Activated naive CD4-positive, alpha-beta T cell treated with anti-CD3 and anti-CD28 coated beads for 36 hours (primary cell): ENCODE measurements at regions of chr17 and their contacts with region 1.

Region 1: DNA sequence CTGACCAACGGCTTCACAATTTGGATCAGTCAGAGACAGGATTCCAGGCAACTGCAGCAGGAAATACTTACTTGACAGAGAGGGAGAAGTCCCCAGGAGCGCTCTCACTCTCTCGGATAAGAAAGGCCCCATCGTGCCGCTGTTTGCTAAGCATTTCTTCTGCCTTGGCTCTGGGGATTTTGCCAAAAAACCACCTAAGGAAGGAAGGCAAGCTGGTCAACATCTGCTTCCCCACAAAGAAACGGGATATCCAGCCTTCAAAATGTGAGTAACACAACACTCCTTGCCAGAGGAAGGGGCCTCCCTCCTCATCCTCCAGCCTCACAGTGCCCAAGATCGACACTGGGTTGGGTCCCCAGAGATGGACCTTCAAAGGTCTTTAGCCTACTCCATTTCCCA is 36.6 kb upstream of the SLC25A19 start:
- DNase-seq: no peak
- H3K4me3 Mint-ChIP-seq: no peak overlapping the region
- H3K27ac Mint-ChIP-seq: peak overlapping the region; percentile 74
- H3K4me1 Mint-ChIP-seq: peaks cover 31% of the 10 kb centered on the region
- H3K27me3 Mint-ChIP-seq: no peaks in the 10 kb centered on the region

Region 2: GRCh38 chr17:75338335-75338734 is 12.5 kb after region 1 on chr17:
- CTCF ChIA-PET with region 1: interaction called, 15 read pairs
- intact Hi-C with region 1: loop called (anchors 2 kb)
- DNase-seq: no peak
- H3K4me3 Mint-ChIP-seq: peak overlapping the region; percentile 56
- H3K27ac Mint-ChIP-seq: peak overlapping the region; percentile 90
- H3K4me1 Mint-ChIP-seq: peaks cover 78% of the 10 kb centered on the region
- H3K27me3 Mint-ChIP-seq: no peaks in the 10 kb centered on the region

Region 3: DNA sequence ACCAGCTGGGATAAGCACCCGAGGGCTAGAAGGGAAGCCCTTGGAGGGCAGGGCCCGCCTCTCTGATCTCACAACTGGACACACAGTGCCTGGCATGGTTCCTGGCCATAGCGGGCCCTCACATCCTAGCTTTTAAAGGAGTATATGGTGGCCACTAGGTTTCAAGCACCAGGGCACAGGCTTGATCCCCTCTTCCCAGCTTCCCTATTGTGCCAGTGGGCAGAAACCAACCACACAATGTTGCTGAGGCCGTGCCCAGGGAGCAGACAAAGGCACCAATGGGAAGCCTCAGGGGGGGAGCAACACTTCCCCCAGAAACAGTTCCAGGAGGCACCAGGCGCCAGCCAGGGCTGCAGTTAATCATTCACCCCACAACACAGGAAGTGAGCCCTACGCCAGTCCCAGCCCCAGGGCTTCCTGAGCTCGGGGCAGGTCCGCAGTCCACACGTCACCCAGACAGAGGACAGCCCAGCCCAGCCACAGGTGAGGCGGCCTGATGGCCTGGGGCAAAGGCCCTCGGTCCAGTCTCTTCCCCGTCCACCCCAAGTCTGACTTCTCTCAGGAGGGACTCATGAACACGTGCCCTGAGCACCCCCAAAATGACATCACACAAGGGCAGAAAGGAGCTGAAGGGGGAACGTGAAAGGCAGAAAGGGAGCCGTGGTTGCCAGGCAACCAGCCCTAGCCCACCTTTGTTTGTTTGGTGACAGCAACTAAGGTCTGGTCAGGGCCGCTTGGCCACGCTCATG is 320.2 kb after region 1 on chr17:
- CTCF ChIA-PET with region 1: no interaction called
- intact Hi-C with region 1: no loop called
- DNase-seq: no peak
- H3K4me3 Mint-ChIP-seq: no peak overlapping the region
- H3K27ac Mint-ChIP-seq: no peak overlapping the region
- H3K4me1 Mint-ChIP-seq: peaks cover 4% of the 10 kb centered on the region
- H3K27me3 Mint-ChIP-seq: no peaks in the 10 kb centered on the region